ENCODE measurements at regions of chrX and their contacts with region 1.

Region 1: DNA sequence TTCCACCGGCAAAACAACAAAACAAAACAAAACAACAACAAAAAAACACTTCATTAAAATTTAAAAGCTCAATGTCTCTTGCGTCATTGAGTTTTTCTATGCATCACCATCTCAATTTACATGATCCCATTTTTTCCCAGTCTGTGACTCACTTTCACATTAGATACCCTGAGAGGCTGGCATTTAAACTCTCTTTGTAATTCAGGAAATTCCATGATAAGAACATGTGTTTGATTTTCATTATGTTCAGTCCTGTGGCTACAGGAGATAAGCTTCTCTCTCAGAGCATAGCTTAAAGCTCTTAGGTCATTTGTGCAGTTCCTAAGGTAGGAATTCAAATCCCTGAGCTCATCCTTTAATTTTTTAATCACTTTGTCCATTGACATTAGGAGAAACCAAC is 104.6 kb downstream of the NBDY start:
- DNase-seq: no peak
- CTCF ChIP-seq: no peak

Region 2: GRCh38 chrX:56314334-56314733 is 519.3 kb before region 1 on chrX:
- in situ Hi-C with region 1: no loop called
- DNase-seq: no peak
- CTCF ChIP-seq: no peak

Region 3: DNA sequence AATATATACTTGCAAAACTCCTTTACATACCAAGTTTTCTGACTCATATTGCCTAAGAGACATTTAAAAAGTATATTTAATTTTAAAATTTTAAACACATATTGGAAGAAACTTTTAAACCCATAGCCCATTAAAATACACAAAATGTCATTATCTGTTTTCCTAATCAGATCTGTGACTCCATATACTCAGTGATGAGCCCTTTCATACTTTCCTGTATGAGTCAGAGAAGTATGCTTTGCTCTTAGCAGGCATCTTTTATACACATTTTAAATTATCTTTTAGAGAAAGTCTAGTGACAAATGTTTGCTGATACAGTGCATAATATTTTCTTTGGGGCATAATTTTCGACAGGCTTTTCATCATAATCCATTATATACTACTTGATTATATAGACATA is 135.4 kb after region 1 on chrX:
- in situ Hi-C with region 1: loop called (anchors 25 kb)
- DNase-seq: no peak
- CTCF ChIP-seq: no peak

Region 4: DNA sequence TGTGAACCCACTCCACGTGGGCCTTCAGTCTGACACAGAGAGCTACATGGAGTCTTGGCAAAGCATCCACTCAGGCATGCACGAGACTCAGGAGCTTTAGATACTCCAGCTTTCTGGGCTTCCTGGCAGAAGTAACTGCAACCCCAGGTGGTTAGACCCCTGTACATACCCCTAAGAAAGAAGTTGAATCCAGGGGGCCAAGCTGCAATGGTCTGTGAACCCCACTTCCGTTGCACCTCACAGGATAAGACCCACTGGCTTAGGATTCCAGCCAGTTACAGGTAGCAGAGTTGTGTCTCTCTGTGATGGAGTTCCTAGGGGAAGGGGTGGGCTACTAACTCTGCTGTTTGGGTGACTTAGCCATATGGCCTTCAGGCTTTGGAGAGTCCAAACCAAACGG is 431.5 kb after region 1 on chrX:
- in situ Hi-C with region 1: no loop called
- DNase-seq: no peak
- CTCF ChIP-seq: no peak

Measured in GM13976 (cell line).